ENCODE measurements at regions of chr11 and their contacts with region 1.

Region 1: GRCh38 chr11:10307442-10308207 is 2.8 kb downstream of the ADM start:
- DNase-seq: peak; percentile 96
- H3K4me3 ChIP-seq: peak overlapping the region; percentile 91 to 95 (median 93)
- H3K27ac ChIP-seq: peak overlapping the region; percentile 80
- H3K4me1 ChIP-seq: peaks cover 42% of the 10 kb centered on the region
- H3K27me3 ChIP-seq: no peaks in the 10 kb centered on the region
- CTCF ChIP-seq: peak; percentile 87 to 99
- POLR2A ChIP-seq: peak; percentile 90

Region 2: GRCh38 chr11:9573052-9573774 is 734.4 kb before region 1 on chr11 and contains the start of gene WEE1:
- CTCF ChIA-PET with region 1: no interaction called
- POLR2A ChIA-PET with region 1: interaction called, 6 read pairs
- dilution Hi-C with region 1: no loop called
- intact Hi-C with region 1: loop called (anchors 1 kb)
- DNase-seq: peak; percentile 99
- H3K4me3 ChIP-seq: peak within 1 kb of the TSS; percentile 56 to 97 (median 63)
- H3K27ac ChIP-seq: peak within 1 kb of the TSS; percentile 83
- H3K4me1 ChIP-seq: peaks cover 34% of the 10 kb centered on the region
- H3K27me3 ChIP-seq: no peaks in the 10 kb centered on the region
- CTCF ChIP-seq: no peak
- POLR2A ChIP-seq: peak; percentile 50
- total RNA-seq, gene WEE1: 42.8 and 47.0 TPM in 2 replicates

Region 3: DNA sequence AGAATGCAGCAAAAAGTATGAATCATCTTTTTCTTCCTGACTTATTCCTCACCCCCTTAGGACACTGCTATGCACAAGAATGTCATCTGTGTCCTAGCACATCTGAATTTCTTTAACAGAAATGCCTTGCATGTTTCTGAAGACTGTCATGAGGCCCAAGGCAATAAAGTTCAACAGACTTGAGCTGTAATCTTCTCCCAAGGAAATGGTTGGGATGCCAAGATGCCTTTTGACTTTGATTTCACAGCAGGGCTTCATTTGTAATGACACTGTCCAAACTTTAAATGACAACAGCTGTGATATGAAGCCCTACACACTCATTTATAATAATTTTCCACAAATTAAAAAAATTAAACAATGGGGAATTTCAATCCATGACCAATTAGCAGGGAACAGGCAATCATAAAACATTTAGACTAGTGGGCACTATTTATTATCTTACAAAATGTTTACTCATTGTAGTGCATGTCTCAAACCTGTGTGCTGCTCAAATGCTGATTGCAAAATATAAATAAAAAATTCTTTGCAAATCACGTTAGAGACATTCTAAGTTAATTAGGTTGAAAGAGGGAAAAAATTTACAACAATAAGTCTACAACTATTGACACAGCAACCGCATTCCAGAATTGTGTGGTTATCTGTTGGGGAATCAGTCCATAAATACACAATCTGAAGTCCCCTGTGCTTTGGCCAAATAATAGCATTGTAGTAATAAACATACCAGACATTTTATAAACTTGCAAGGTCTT is 401.4 kb before region 1 on chr11:
- CTCF ChIA-PET with region 1: no interaction called
- POLR2A ChIA-PET with region 1: interaction called, 3 read pairs
- dilution Hi-C with region 1: no loop called
- intact Hi-C with region 1: loop called (anchors 5 kb)
- DNase-seq: peak; percentile 71
- H3K4me3 ChIP-seq: no peak overlapping the region
- H3K27ac ChIP-seq: peak overlapping the region; percentile 86
- H3K4me1 ChIP-seq: peaks cover 30% of the 10 kb centered on the region
- H3K27me3 ChIP-seq: no peaks in the 10 kb centered on the region
- CTCF ChIP-seq: no peak
- POLR2A ChIP-seq: no peak

Region 4: DNA sequence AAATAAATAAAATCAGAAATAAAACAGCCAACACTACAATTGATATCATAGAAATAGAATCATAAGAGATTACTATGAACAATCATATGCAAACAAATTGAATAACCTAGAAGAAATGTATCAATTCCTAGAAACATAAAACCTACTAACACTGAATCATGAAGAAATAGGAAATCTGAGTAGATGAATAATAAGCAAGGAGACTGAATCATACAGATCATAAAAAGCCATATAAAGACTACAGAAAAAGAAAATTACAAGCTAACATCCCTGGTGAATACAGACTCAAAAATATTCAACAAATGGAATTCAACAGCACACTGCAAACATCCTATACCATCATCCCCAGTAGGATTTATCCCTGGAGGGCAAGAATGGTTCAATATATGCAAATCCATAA is 149.2 kb before region 1 on chr11:
- CTCF ChIA-PET with region 1: no interaction called
- POLR2A ChIA-PET with region 1: no interaction called
- dilution Hi-C with region 1: no loop called
- intact Hi-C with region 1: no loop called
- DNase-seq: no peak
- H3K4me3 ChIP-seq: no peak overlapping the region
- H3K27ac ChIP-seq: no peak overlapping the region
- H3K4me1 ChIP-seq: no peaks in the 10 kb centered on the region
- H3K27me3 ChIP-seq: no peaks in the 10 kb centered on the region
- CTCF ChIP-seq: no peak
- POLR2A ChIP-seq: no peak

Region 5: DNA sequence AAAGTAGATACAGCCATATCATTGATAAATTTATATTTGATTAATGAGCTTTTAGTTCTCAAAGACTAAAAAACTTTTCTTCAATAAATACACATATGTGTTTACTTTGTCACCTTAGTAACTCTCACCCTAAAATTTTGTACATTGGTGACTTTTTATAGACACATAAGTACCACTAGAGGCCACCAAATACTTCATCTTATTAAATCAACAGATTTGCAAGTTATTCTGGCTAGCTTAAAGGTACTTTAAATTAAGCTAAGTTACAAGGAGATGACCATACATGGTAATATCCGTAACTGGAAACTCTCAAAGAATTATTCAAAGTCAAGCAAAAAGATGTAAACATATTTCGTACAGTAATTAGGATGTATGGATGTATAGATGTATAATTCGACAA is 125.8 kb before region 1 on chr11:
- CTCF ChIA-PET with region 1: interaction called, 8 read pairs
- POLR2A ChIA-PET with region 1: interaction called, 4 read pairs
- dilution Hi-C with region 1: no loop called
- intact Hi-C with region 1: loop called (anchors 2 kb)
- DNase-seq: peak; percentile 48
- H3K4me3 ChIP-seq: no peak overlapping the region
- H3K27ac ChIP-seq: no peak overlapping the region
- H3K4me1 ChIP-seq: no peaks in the 10 kb centered on the region
- H3K27me3 ChIP-seq: no peaks in the 10 kb centered on the region
- CTCF ChIP-seq: peak; percentile 14 to 16
- POLR2A ChIP-seq: no peak

Region 6: DNA sequence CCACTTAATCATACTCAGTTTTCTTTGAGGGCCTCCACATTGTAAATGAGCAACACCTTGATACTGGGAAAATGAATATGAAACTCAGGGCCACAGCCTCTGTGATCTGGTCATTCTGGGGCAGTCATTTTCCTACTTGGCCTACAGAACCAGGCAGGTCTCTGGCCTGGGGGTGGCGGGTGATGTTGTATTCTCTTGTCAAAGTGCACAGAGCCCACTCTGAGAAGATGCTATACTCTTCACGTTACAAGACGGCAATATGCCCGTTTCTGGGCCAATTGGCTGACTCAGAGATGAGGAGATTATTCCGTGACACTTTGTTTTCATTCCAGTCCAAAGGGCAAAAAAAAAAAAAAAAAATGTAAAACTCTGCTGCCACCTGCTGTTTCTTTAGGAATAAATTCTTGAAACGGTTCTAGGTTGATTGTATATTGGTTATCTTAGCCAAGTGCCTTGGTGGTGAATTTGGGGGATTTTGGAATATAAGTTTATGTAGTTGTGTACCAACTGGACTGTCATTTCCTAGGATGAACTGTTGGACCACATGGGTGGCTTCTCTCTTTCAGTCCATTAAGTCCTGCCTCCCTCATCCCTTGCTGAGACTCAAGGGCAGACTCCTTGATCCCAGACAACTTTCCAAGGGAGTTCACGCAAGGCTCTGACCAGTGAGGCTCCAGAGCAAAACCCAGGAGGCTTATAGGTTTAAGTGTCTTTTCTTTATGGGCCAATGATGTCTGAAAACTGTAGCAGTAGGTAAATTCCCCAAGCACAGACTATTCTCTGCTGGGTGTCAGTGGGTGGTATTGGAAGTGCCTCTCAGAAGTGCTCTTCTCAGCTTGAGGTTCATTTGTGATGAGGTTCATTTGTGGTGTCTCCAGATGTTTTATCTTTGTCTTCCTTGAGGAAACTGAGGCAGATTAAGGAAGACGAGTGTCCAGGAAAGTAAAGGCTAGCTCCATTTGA is 15.5 kb after region 1 on chr11:
- CTCF ChIA-PET with region 1: interaction called, 73 read pairs
- POLR2A ChIA-PET with region 1: interaction called, 13 read pairs
- dilution Hi-C with region 1: no loop called
- intact Hi-C with region 1: loop called (anchors 1 kb)
- DNase-seq: peak; percentile 92
- H3K4me3 ChIP-seq: no peak overlapping the region
- H3K27ac ChIP-seq: peak overlapping the region; percentile 28
- H3K4me1 ChIP-seq: peaks cover 57% of the 10 kb centered on the region
- H3K27me3 ChIP-seq: no peaks in the 10 kb centered on the region
- CTCF ChIP-seq: peak; percentile 28 to 46
- POLR2A ChIP-seq: no peak

Region 7: GRCh38 chr11:10366568-10367370 is 59.1 kb after region 1 on chr11:
- CTCF ChIA-PET with region 1: interaction called, 117 read pairs
- POLR2A ChIA-PET with region 1: interaction called, 23 read pairs
- dilution Hi-C with region 1: no loop called
- intact Hi-C with region 1: loop called (anchors 1 kb)
- DNase-seq: peak; percentile 94
- H3K4me3 ChIP-seq: no peak overlapping the region
- H3K27ac ChIP-seq: peak overlapping the region; percentile 21
- H3K4me1 ChIP-seq: peaks cover 6% of the 10 kb centered on the region
- H3K27me3 ChIP-seq: no peaks in the 10 kb centered on the region
- CTCF ChIP-seq: peak; percentile 85 to 91
- POLR2A ChIP-seq: no peak

Region 8: DNA sequence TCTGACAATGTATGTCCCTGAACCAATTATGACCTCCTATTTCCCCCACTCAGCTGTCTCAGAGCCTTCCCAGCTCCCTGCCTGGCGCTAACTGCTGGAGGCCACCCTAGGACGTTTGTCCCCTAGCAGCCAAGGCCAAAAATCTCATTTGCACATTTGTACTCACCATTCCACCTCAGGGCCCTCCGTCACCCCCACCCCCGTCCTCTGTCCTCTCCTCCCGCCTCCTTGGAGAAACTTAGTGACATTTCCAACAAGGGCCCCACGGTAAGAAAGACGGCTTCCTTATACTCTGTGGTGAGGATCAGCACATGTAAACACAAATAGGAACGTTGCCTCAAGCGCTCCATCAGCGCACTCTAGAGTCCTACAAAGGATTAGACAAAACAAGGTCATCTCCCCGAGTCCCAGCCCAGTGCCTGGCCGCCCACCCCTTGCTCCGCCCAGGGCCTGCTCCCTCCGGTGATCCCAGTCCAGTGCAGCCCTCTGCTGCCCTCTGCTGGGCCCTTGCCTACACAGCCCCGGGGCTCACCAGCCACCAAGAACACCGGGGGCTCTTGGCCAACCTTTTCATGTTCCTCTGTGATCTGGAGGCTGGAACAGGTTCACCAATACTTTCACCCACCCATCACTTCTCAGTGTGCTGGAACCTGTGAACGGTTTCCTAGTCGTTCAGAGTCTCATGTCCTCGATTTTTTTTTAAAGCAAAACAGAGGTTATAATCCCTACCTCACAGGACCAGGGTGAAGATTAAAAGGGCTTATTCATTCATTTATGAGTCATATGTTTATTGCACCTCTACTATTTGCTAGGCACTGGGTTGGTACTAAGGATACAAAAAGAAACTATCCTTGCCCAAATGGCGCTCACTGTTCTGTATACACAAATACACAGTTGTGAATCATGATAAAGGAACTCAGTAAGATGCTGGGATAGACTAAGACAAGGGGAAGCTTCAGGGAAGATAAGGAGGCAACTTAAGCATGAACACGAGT is 428.2 kb after region 1 on chr11:
- CTCF ChIA-PET with region 1: no interaction called
- POLR2A ChIA-PET with region 1: no interaction called
- dilution Hi-C with region 1: no loop called
- intact Hi-C with region 1: loop called (anchors 1 kb)
- DNase-seq: peak; percentile 92
- H3K4me3 ChIP-seq: no peak overlapping the region
- H3K27ac ChIP-seq: peak overlapping the region; percentile 41
- H3K4me1 ChIP-seq: peaks cover 10% of the 10 kb centered on the region
- H3K27me3 ChIP-seq: no peaks in the 10 kb centered on the region
- CTCF ChIP-seq: peak; percentile 98
- POLR2A ChIP-seq: no peak

Measured in endothelial cell of umbilical vein (primary cell).